Posterior vena cava (tissue), 2 donors: ENCODE measurements at regions of chr16 and their contacts with region 1.

Region 1: GRCh38 chr16:58129097-58129936 is at the start of gene CFAP20:
- DNase-seq: peak; percentile 100
- total RNA-seq, gene CFAP20: 14.5 to 15.3 TPM

Region 2: GRCh38 chr16:57795431-57795878 is 333.9 kb before region 1 on chr16:
- intact Hi-C with region 1: loop called in 1 of 2 experiments (anchors 10 kb)
- DNase-seq: no peak

Region 3: GRCh38 chr16:58020628-58021139 is 108.6 kb before region 1 on chr16:
- intact Hi-C with region 1: loop called in 1 of 2 experiments (anchors 5 kb)
- DNase-seq: no peak